ENCODE measurements at regions of chr17 and their contacts with region 1.

Region 1: GRCh38 chr17:7435221-7435675 is at the start of gene TMEM102:
- DNase-seq: peak; percentile 96
- ATAC-seq: peak; percentile 84
- total RNA-seq, gene TMEM102: 1.7 TPM

Region 2: GRCh38 chr17:7484067-7484918 is 49.0 kb after region 1 on chr17 and contains the start of gene POLR2A:
- intact Hi-C with region 1: loop called (anchors 5 kb)
- DNase-seq: peak; percentile 99
- ATAC-seq: peak; percentile 84
- total RNA-seq, gene POLR2A: 32.9 TPM

Measured in Right ventricle myocardium superior (tissue), 1 donor.